CD8-positive, alpha-beta T cell (primary cell): ENCODE measurements at regions of chr16 and their contacts with region 1.

Region 1: GRCh38 chr16:31678649-31679325 is 151.1 kb downstream of the AHSP start:
- DNase-seq: no peak
- ATAC-seq: no peak
- H3K4me3 ChIP-seq: no peak overlapping the region
- H3K4me3 Mint-ChIP-seq: no peak overlapping the region
- H3K27ac ChIP-seq: no peak overlapping the region
- H3K27ac Mint-ChIP-seq: no peak overlapping the region
- H3K4me1 ChIP-seq: no peaks in the 10 kb centered on the region
- H3K4me1 Mint-ChIP-seq: peaks cover 8% of the 10 kb centered on the region
- H3K27me3 ChIP-seq: no peaks in the 10 kb centered on the region
- H3K27me3 Mint-ChIP-seq: peaks cover 6% of the 10 kb centered on the region
- CTCF ChIP-seq: no peak

Region 2: DNA sequence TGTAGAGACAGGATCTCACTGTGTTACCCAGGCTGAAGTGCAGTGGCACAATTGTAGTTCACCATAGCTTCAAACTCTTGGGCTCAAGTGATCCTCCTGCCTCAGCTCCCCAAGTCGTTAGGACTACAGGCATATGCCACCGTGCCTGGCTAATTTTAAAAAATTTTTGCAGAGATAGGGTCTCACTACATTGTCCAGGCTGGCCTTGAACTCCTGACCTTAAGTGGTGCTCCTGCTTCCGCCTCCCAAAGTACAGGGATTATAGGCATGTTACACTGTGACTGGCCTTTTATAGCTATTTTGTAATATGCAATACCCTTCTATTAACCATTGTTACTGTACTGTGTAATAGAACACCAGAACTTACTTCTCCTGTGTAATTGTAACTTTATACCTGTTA is 55.5 kb after region 1 on chr16:
- CTCF ChIA-PET with region 1: no interaction called
- POLR2A ChIA-PET with region 1: no interaction called
- intact Hi-C with region 1: loop called in 1 of 2 experiments (anchors 5 kb)
- DNase-seq: no peak
- ATAC-seq: no peak
- H3K4me3 ChIP-seq: no peak overlapping the region
- H3K4me3 Mint-ChIP-seq: no peak overlapping the region
- H3K27ac ChIP-seq: no peak overlapping the region
- H3K27ac Mint-ChIP-seq: no peak overlapping the region
- H3K4me1 ChIP-seq: no peaks in the 10 kb centered on the region
- H3K4me1 Mint-ChIP-seq: peaks cover 5% of the 10 kb centered on the region
- H3K27me3 ChIP-seq: no peaks in the 10 kb centered on the region
- H3K27me3 Mint-ChIP-seq: no peaks in the 10 kb centered on the region
- CTCF ChIP-seq: no peak